ENCODE measurements at regions of chr20 and their contacts with region 1.

Region 1: GRCh38 chr20:64053841-64054661 is 4.6 kb upstream of the SOX18 start:
- DNase-seq: peak; percentile 90
- H3K4me3 ChIP-seq: peak overlapping the region in 2 of 3 experiments; percentile 9 to 21
- H3K27ac ChIP-seq: peak overlapping the region; percentile 83
- H3K4me1 ChIP-seq: peaks cover 74% of the 10 kb centered on the region
- H3K27me3 ChIP-seq: no peaks in the 10 kb centered on the region
- CTCF ChIP-seq: peak; percentile 40 to 48
- POLR2A ChIP-seq: peak; percentile 93

Region 2: DNA sequence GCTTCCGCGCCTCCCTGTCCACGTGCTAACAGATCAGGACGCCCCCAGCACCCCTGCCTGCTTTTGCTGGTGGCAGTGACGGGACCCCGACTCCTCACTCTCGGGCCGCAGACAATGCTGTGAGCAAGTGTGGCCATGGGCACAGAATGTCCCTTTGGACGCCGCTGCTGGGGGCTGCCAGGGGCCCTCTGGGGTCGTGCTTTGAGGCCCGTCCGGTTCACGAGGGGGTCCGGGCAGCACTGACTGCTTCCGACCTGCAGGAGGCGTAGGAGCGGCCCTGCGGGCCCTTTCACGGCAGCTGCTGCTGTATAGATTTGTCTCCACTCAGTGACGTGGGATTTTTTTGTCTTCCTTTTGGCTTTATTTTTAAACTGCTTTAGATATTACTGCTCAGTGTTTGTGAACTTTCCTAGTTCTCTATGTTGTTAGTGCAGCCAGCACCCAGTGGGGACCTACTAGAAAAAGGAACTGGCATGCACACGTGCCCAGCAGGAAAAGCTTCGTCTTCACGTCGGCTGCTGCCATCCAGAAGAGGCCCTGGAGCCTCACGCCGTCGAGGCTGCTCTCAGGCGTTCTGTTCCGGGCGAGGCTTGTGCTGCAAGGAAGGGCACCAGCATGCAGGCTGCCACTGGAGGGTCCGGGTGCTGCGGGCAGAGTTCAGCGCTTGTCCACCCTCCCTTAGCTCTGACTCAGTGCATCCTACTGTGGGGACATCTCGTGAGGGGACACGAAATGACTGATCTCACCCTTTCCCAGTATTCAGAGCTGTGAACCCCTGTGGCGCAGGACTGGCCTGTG is 119.6 kb before region 1 on chr20:
- CTCF ChIA-PET with region 1: no interaction called
- POLR2A ChIA-PET with region 1: no interaction called
- dilution Hi-C with region 1: no loop called
- intact Hi-C with region 1: no loop called
- DNase-seq: no peak
- H3K4me3 ChIP-seq: no peak overlapping the region
- H3K27ac ChIP-seq: no peak overlapping the region
- H3K4me1 ChIP-seq: no peaks in the 10 kb centered on the region
- H3K27me3 ChIP-seq: no peaks in the 10 kb centered on the region
- CTCF ChIP-seq: peak; percentile 23 to 50
- POLR2A ChIP-seq: no peak

Region 3: DNA sequence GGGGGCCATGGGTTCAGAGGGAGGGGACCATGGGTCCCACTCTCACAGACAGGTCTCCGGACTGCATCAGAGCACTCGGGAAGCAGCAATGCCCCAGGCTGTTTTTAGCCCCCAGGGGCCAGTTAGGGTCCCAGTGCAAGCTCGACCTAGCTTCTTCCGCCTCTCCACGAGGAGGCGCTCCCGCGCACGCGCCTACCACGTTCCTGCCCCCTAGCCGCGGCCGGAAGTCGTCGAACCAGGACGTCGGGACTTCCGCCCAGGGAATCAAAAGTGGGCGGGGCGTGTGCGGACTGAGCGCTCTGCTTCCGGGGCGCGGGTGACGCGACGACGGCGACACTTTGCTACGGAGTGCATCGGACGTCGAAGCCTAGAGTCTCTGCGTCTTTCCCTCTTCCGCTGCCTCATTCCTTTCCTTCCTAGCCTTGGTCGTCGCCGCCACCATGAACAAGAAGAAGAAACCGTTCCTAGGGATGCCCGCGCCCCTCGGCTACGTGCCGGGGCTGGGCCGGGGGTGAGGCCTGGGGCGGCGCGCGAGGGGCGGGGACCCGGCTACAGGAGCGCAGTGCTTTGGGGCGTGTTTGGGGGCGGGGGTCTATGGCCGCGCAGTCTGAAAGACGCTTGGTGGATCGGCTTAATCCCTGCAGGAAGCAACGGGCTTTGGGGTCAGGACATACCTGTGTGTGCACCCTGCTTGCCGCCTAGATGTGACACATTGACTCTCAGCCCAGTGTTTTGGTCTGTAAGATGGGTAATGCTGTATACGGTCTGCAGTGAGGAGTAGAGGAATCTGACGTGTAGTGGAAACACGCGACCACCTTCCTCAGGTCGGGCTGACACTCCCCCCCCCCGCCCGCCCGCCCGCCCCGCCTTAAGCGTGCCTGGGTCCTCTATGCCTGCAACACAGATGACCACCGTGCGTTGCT is 73.0 kb before region 1 on chr20 and contains the start of gene PRPF6:
- CTCF ChIA-PET with region 1: interaction called, 33 read pairs
- POLR2A ChIA-PET with region 1: interaction called, 3 read pairs
- dilution Hi-C with region 1: no loop called
- intact Hi-C with region 1: loop called (anchors 1 kb)
- DNase-seq: peak; percentile 94
- H3K4me3 ChIP-seq: peak within 1 kb of the TSS; percentile 25 to 67 (median 58)
- H3K27ac ChIP-seq: peak within 1 kb of the TSS; percentile 6
- H3K4me1 ChIP-seq: peaks cover 20% of the 10 kb centered on the region
- H3K27me3 ChIP-seq: no peaks in the 10 kb centered on the region
- CTCF ChIP-seq: peak; percentile 87 to 95
- POLR2A ChIP-seq: peak; percentile 66
- total RNA-seq, gene PRPF6: 64.2 and 67.4 TPM in 2 replicates

Measured in endothelial cell of umbilical vein (primary cell).